CD4-positive, alpha-beta memory T cell (primary cell): ENCODE measurements at regions of chr12 and their contacts with region 1.

Region 1: DNA sequence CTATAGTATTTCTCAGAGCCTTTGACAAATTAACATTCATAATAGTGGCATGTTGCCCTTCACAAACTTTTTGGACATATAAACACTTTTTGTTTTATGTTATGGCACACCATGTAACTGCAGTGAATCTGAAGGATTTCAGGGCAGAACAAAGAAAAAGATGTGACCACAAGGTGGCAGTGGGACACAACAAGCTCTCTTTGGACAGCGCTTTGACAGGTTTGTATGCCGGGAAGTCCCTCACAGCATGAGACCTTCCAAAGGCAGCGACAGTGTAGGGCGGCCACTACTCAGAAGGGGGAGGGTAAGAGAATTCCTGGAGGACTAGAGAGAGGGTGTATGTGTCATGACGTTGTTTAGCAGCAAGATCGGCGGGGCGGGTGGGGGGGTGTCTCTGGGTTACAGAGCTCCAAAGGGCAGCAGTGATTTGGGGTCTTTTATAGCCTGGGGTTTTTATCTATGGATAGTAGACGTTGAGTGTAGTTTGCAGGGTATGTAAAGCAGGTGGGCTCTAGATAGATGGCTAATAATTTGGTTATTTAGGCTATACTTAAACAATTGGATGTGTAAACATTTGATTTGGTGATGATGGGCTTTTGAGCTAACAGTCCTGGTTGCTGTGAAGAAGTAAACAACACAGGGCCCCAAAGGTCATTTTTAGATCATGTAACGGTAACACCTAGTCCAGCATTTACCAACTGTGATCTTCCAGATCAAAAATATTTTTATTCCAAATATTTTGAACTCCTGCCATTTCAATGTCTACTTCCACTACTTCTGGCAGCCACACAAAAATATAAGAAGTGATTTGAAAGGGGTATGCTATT is 22.9 kb downstream of the ETFBKMT start:
- DNase-seq: peak; percentile 68 to 73 (median 71)
- H3K4me3 ChIP-seq: no peak overlapping the region
- H3K4me3 Mint-ChIP-seq: peak overlapping the region in 4 of 8 donors; percentile 58 to 80 (median 71)
- H3K27ac ChIP-seq: no peak overlapping the region
- H3K27ac Mint-ChIP-seq: peak overlapping the region; percentile 53 to 92 (median 88)
- H3K4me1 ChIP-seq: no peaks in the 10 kb centered on the region
- H3K4me1 Mint-ChIP-seq: peaks cover 6 to 15% (median 9%) of the 10 kb centered on the region in 4 donors
- H3K27me3 ChIP-seq: no peaks in the 10 kb centered on the region
- H3K27me3 Mint-ChIP-seq: no peaks in the 10 kb centered on the region

Region 2: GRCh38 chr12:31589904-31590641 is 92.3 kb before region 1 on chr12:
- CTCF ChIA-PET with region 1: no interaction called
- POLR2A ChIA-PET with region 1: no interaction called
- intact Hi-C with region 1: no loop called
- DNase-seq: peak in 2 of 5 donors; percentile 0 to 2
- H3K4me3 ChIP-seq: peak overlapping the region; percentile 17 to 38
- H3K4me3 Mint-ChIP-seq: peak overlapping the region; percentile 78 to 89 (median 84)
- H3K27ac ChIP-seq: no peak overlapping the region
- H3K27ac Mint-ChIP-seq: peak overlapping the region in 1 of 7 donors; percentile 24
- H3K4me1 ChIP-seq: peaks cover 5% of the 10 kb centered on the region
- H3K4me1 Mint-ChIP-seq: peaks cover 10 to 19% (median 11%) of the 10 kb centered on the region in 4 donors
- H3K27me3 ChIP-seq: peaks cover 23% of the 10 kb centered on the region
- H3K27me3 Mint-ChIP-seq: peaks cover 44 to 47% of the 10 kb centered on the region in 2 donors

Region 3: GRCh38 chr12:31650927-31651326 is 31.4 kb before region 1 on chr12:
- CTCF ChIA-PET with region 1: interaction called, 22 read pairs
- POLR2A ChIA-PET with region 1: interaction called, 7 read pairs
- intact Hi-C with region 1: loop called (anchors 1 kb)
- DNase-seq: no peak
- H3K4me3 ChIP-seq: no peak overlapping the region
- H3K4me3 Mint-ChIP-seq: no peak overlapping the region
- H3K27ac ChIP-seq: no peak overlapping the region
- H3K27ac Mint-ChIP-seq: no peak overlapping the region
- H3K4me1 ChIP-seq: peaks cover 12% of the 10 kb centered on the region
- H3K4me1 Mint-ChIP-seq: peaks cover 6 to 12% (median 7%) of the 10 kb centered on the region in 4 donors
- H3K27me3 ChIP-seq: no peaks in the 10 kb centered on the region
- H3K27me3 Mint-ChIP-seq: peaks cover 0 to 2% of the 10 kb centered on the region in 2 donors

Region 4: DNA sequence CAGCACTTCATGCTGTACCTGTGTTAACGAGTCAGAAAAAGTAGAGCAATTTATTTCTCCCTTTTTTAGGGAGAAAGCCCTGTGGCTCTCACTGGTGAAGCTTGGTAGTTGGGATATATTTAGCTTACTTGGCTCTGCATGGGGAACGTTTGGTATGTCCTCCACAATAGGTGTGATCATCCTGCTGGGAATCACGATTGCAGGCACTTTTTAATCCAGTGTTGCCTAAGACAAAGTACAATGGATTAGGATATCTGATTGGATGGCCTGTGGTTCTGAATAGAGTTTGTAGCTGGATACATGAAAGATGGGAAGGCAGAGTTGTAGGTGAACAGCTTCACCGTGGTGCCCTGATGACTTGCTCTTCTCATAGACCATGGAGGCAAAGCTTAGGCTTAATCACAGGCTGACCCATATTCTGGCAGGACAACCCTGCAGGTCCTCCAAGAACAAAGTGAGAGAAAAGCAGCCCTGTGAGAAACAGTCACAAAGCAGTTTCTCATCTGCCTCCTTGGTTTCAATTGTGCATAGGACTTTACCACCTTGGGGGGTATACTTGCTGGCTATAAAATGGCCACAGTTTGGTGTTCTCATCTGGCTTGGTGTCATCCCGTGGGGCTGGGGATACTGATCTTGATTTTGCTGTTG is 284.3 kb after region 1 on chr12:
- CTCF ChIA-PET with region 1: interaction called, 19 read pairs
- POLR2A ChIA-PET with region 1: interaction called, 7 read pairs
- intact Hi-C with region 1: no loop called
- DNase-seq: no peak
- H3K4me3 ChIP-seq: peak overlapping the region; percentile 34 to 39
- H3K4me3 Mint-ChIP-seq: peak overlapping the region; percentile 93 to 98 (median 96)
- H3K27ac ChIP-seq: peak overlapping the region; percentile 35
- H3K27ac Mint-ChIP-seq: peak overlapping the region; percentile 85 to 95 (median 94)
- H3K4me1 ChIP-seq: peaks cover 94% of the 10 kb centered on the region
- H3K4me1 Mint-ChIP-seq: peaks cover 60 to 95% (median 73%) of the 10 kb centered on the region in 4 donors
- H3K27me3 ChIP-seq: no peaks in the 10 kb centered on the region
- H3K27me3 Mint-ChIP-seq: no peaks in the 10 kb centered on the region

Region 5: DNA sequence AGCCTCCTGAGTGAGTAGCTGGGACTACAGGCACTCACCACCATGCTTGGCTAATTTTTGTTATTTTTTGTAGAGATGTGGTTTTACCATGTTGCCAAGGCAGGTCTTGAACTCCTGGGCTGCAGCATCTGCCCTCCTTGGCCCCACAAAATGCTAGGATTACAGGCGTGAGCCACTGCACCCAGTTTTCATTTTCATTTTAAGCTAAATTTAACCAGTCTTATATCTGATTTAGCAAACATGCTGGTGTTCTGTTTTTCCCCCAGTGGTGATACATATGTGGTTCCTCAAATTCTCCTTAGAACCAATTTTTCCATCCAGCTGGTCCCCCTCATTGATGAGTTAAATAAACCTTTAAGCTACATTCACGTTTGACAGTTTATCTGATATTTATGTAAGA is 380.5 kb after region 1 on chr12:
- CTCF ChIA-PET with region 1: interaction called, 7 read pairs
- POLR2A ChIA-PET with region 1: no interaction called
- intact Hi-C with region 1: loop called (anchors 1 kb)
- DNase-seq: no peak
- H3K4me3 ChIP-seq: no peak overlapping the region
- H3K4me3 Mint-ChIP-seq: no peak overlapping the region
- H3K27ac ChIP-seq: no peak overlapping the region
- H3K27ac Mint-ChIP-seq: peak overlapping the region in 2 of 7 donors; percentile 29 to 38
- H3K4me1 ChIP-seq: no peaks in the 10 kb centered on the region
- H3K4me1 Mint-ChIP-seq: peaks cover 5 to 12% (median 8%) of the 10 kb centered on the region in 4 donors
- H3K27me3 ChIP-seq: no peaks in the 10 kb centered on the region
- H3K27me3 Mint-ChIP-seq: no peaks in the 10 kb centered on the region

Region 6: GRCh38 chr12:32312049-32312670 is 629.8 kb after region 1 on chr12:
- CTCF ChIA-PET with region 1: interaction called, 18 read pairs
- POLR2A ChIA-PET with region 1: interaction called, 3 read pairs
- intact Hi-C with region 1: loop called (anchors 1 kb)
- DNase-seq: peak in 4 of 5 donors; percentile 31 to 52 (median 38)
- H3K4me3 ChIP-seq: no peak overlapping the region
- H3K4me3 Mint-ChIP-seq: peak overlapping the region in 2 of 8 donors; percentile 14 to 65
- H3K27ac ChIP-seq: no peak overlapping the region
- H3K27ac Mint-ChIP-seq: peak overlapping the region in 1 of 7 donors; percentile 87
- H3K4me1 ChIP-seq: no peaks in the 10 kb centered on the region
- H3K4me1 Mint-ChIP-seq: peaks cover 3 to 9% (median 4%) of the 10 kb centered on the region in 4 donors
- H3K27me3 ChIP-seq: no peaks in the 10 kb centered on the region
- H3K27me3 Mint-ChIP-seq: no peaks in the 10 kb centered on the region